ENCODE measurements at regions of chr10 and their contacts with region 1.

Region 1: GRCh38 chr10:12656518-12657142 is 307.3 kb downstream of the CAMK1D start:
- DNase-seq: no peak
- H3K4me3 Mint-ChIP-seq: no peak overlapping the region
- H3K27ac Mint-ChIP-seq: peak overlapping the region; percentile 45
- H3K4me1 Mint-ChIP-seq: peaks cover 28% of the 10 kb centered on the region
- H3K27me3 Mint-ChIP-seq: no peaks in the 10 kb centered on the region

Region 2: DNA sequence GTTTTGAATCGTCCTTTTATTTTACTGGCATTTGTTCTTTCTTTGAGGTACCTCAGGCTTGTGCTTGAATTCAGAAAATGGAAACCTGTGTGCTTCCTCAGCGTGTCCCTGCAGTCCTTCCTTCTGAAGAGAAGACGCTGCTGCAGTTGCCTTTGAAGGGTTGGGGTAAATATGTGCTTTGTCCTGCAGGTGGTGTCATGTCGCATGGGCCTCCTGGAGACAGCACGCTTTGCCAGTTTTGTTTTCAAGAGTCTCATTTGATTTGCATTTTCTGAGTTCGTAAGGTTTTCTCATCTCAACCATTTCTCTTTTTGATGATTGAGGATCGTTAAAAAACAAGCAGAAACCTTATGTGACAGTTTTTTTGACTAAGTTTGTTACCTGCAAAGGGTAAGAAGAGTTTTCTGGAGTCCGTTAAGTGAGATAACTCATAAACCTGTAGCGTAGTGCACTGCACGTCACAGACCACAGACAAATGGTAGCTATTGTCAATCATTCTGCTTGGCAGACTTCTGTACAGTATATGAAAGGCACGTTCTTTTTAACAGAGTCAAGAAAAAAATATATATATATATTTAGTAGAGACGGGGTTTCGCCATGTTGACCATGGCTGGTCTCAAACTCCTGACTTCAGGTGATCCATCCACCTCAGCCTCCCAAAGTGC is 403.6 kb before region 1 on chr10:
- CTCF ChIA-PET with region 1: interaction called, 12 read pairs
- POLR2A ChIA-PET with region 1: no interaction called
- DNase-seq: no peak
- H3K4me3 Mint-ChIP-seq: no peak overlapping the region
- H3K27ac Mint-ChIP-seq: no peak overlapping the region
- H3K4me1 Mint-ChIP-seq: no peaks in the 10 kb centered on the region
- H3K27me3 Mint-ChIP-seq: no peaks in the 10 kb centered on the region

Region 3: GRCh38 chr10:12264204-12264940 is 392.3 kb before region 1 on chr10:
- CTCF ChIA-PET with region 1: interaction called, 84 read pairs
- POLR2A ChIA-PET with region 1: no interaction called
- DNase-seq: peak; percentile 75
- H3K4me3 Mint-ChIP-seq: peak overlapping the region; percentile 63
- H3K27ac Mint-ChIP-seq: peak overlapping the region; percentile 65
- H3K4me1 Mint-ChIP-seq: peaks cover 30% of the 10 kb centered on the region
- H3K27me3 Mint-ChIP-seq: no peaks in the 10 kb centered on the region

Region 4: DNA sequence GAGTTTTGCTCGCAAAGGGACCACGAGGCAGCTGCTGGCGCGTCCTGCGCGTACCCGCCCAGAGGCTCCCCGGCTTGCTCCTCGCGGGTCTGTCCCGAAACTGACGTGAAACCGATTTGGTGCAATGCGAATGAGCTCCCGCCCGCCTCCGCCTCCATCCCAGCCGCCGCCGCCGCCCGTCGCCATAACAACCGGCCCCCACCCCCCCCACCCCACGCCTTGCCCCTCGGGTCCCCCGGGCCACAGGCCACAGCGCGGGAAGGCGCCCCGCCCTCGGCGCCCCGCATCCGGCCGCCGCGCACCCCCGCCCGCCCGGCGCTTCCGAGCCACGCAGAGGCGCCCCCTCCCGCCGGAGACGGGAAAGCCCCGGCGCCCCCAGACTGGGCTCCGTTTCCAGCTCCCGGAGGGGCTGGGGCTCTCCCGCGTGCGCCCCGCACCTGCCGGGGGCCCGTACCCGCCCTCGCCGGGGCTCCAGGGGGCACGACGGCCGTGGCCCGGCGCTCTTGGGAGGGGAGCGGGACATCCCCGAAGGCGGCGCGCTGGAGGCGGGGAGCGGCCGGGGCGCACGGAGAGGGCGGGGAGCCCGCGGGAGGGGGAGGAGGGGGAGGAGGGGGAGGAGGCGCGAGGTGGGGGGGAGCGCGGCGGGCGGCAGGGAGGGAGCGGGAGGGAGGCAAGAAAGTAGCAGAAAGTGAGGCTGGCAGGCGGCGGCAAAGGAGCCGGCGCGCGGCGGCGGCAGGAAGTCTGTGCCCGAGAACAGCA is 307.6 kb before region 1 on chr10 and contains the start of gene CAMK1D:
- CTCF ChIA-PET with region 1: interaction called, 26 read pairs
- POLR2A ChIA-PET with region 1: interaction called, 4 read pairs
- DNase-seq: peak; percentile 92
- H3K4me3 Mint-ChIP-seq: peak within 1 kb of the TSS; percentile 91
- H3K27ac Mint-ChIP-seq: peak within 1 kb of the TSS; percentile 96
- H3K4me1 Mint-ChIP-seq: peaks cover 49% of the 10 kb centered on the region
- H3K27me3 Mint-ChIP-seq: peaks cover 27% of the 10 kb centered on the region
- total RNA-seq, gene CAMK1D: 16.7 to 17.8 TPM

Region 5: GRCh38 chr10:12638103-12638502 is 18.5 kb before region 1 on chr10:
- CTCF ChIA-PET with region 1: interaction called, 18 read pairs
- POLR2A ChIA-PET with region 1: no interaction called
- DNase-seq: peak; percentile 48
- H3K4me3 Mint-ChIP-seq: no peak overlapping the region
- H3K27ac Mint-ChIP-seq: no peak overlapping the region
- H3K4me1 Mint-ChIP-seq: peaks cover 48% of the 10 kb centered on the region
- H3K27me3 Mint-ChIP-seq: no peaks in the 10 kb centered on the region

Region 6: DNA sequence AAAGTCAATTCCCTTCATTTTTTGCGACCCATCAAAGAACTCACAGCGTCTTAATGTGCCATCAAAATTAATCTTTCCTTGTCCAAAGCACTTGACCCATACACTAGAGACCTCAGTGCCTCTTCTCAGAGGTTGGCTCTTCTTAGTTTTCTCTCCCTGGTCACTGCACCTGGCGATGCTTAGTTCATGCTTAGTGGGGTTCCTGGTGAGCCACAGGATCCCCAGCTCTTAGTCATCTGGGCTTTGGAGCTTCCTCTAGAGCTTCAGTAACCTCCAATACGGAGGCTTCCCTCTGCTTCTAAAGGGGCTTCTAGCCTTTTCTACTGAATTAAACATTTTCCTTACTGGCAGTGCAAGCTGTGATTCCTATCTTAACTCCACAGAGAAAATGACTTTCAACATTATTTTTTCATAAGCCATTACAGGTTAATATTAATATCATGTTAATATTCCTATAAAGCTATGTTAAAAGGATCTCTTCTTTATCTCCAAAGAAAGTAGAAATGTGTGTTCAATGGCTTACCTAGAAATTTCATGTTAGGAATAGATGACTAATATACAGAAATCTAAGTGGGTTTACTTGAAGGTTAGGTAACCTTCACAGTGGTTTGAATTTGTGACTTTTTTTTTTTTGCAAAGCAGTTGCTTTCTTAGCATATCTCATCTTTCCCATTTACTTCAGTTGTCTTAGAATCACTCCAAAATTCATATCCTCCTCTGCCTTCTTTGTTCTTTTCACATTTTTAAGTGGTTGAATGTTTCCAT is 12.1 kb before region 1 on chr10:
- CTCF ChIA-PET with region 1: interaction called, 18 read pairs
- POLR2A ChIA-PET with region 1: interaction called, 4 read pairs
- DNase-seq: no peak
- H3K4me3 Mint-ChIP-seq: no peak overlapping the region
- H3K27ac Mint-ChIP-seq: no peak overlapping the region
- H3K4me1 Mint-ChIP-seq: peaks cover 23% of the 10 kb centered on the region
- H3K27me3 Mint-ChIP-seq: no peaks in the 10 kb centered on the region

Region 7: DNA sequence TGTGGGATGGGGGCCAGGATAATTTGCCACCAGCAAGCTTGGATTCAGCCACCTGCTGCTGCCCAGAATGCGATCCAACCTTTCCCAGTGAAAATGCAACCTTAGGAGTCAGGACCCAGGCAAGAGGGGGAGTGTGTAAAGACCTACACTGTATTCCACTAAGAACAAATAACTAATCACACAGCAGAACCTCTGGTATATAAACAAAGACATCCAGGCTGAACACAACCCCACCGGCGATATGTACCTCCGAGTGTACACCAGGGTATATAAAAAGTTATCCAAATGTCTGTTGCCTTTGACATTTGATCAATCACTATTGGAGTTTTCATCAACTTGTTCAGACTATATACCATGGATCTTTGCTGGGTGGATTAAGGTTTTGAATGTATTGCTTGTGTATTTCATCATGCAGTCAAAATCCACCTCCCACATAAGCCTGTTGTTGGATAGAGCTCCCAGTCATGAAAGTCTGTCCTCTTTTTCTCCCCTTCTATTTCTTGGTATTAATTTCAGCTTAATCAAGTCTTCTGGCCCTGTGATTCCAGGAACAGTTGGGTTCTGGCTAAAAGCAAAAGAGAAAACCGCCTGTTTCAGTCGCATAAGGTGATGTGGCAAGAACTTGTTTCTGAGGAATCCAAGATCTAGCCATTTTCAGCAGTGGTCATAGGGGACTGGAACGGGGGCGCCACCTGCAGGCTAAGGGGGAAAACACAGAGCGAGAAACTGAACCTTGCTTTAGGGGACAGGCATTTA is 54.1 kb after region 1 on chr10:
- CTCF ChIA-PET with region 1: interaction called, 22 read pairs
- POLR2A ChIA-PET with region 1: interaction called, 4 read pairs
- DNase-seq: peak; percentile 85
- H3K4me3 Mint-ChIP-seq: no peak overlapping the region
- H3K27ac Mint-ChIP-seq: peak overlapping the region; percentile 83
- H3K4me1 Mint-ChIP-seq: peaks cover 68% of the 10 kb centered on the region
- H3K27me3 Mint-ChIP-seq: no peaks in the 10 kb centered on the region

Region 8: GRCh38 chr10:12875100-12875499 is 218.5 kb after region 1 on chr10:
- CTCF ChIA-PET with region 1: no interaction called
- POLR2A ChIA-PET with region 1: no interaction called
- DNase-seq: no peak
- H3K4me3 Mint-ChIP-seq: no peak overlapping the region
- H3K27ac Mint-ChIP-seq: no peak overlapping the region
- H3K4me1 Mint-ChIP-seq: no peaks in the 10 kb centered on the region
- H3K27me3 Mint-ChIP-seq: peaks cover 11% of the 10 kb centered on the region